Gastrocnemius medialis (tissue), 4 donors: ENCODE measurements at regions of chr12 and their contacts with region 1.

Region 1: DNA sequence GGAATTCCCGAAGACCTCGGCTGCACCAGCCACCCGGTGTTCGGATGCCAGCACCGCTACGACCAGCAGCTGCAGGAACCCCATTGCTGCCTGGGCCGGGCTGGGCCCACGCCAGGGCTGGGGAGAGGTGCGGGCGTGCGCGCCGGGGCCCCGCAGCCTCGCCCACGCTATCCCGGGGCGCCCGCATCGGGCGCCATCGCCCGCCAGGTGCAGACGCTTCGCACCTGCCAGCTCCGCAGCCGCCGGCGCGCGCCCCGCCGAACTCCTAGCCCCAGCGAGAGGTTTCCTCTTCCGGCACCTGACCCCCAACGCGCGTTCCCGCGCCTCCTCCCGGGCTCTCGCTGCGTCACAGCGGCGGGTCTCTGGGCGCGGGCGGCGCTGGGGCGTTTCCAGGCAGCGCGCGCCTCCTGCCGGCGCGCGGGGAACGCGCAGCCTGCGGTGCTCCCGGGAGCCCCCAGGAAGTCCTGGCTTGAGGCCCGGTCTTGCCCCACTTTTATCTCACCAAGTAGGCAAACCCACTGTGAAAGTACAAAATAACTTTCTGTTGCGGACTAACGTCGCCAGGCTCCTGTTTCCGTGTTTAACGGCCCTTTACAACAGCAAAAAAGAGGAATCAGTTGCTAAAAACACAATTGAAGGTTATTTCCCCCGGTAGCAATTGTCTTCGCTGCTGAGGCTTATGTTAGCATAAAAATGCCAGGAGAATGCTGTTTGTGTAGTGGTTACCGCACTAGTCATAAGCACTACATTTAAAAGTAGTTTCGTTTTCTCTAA is at the start of gene TM7SF3:
- DNase-seq: peak; percentile 86 to 92
- ATAC-seq: peak; percentile 91 to 94
- H3K4me3 ChIP-seq: peak within 1 kb of the TSS; percentile 76 to 98 (median 89)
- H3K27ac ChIP-seq: peak within 1 kb of the TSS; percentile 85 to 95 (median 92)
- H3K4me1 ChIP-seq: peaks cover 16 to 26% of the 10 kb centered on the region in 2 donors
- H3K27me3 ChIP-seq: no peaks in the 10 kb centered on the region
- CTCF ChIP-seq: peak; percentile 79 to 99 (median 96)
- POLR2A ChIP-seq: peak; percentile 57 to 61
- total RNA-seq, gene TM7SF3: 8.6 to 19.8 (median 14.3) TPM

Region 2: GRCh38 chr12:26853303-26854030 is 160.8 kb before region 1 on chr12:
- in situ Hi-C with region 1: loop called in 1 of 4 experiments (anchors 5 kb)
- intact Hi-C with region 1: loop called (anchors 5 kb)
- DNase-seq: peak; percentile 29 to 50
- ATAC-seq: peak; percentile 80 to 84
- H3K4me3 ChIP-seq: no peak overlapping the region
- H3K27ac ChIP-seq: no peak overlapping the region
- H3K4me1 ChIP-seq: peaks cover 0 to 6% of the 10 kb centered on the region in 2 donors
- H3K27me3 ChIP-seq: no peaks in the 10 kb centered on the region
- CTCF ChIP-seq: peak; percentile 69 to 87 (median 79)
- POLR2A ChIP-seq: no peak

Region 3: DNA sequence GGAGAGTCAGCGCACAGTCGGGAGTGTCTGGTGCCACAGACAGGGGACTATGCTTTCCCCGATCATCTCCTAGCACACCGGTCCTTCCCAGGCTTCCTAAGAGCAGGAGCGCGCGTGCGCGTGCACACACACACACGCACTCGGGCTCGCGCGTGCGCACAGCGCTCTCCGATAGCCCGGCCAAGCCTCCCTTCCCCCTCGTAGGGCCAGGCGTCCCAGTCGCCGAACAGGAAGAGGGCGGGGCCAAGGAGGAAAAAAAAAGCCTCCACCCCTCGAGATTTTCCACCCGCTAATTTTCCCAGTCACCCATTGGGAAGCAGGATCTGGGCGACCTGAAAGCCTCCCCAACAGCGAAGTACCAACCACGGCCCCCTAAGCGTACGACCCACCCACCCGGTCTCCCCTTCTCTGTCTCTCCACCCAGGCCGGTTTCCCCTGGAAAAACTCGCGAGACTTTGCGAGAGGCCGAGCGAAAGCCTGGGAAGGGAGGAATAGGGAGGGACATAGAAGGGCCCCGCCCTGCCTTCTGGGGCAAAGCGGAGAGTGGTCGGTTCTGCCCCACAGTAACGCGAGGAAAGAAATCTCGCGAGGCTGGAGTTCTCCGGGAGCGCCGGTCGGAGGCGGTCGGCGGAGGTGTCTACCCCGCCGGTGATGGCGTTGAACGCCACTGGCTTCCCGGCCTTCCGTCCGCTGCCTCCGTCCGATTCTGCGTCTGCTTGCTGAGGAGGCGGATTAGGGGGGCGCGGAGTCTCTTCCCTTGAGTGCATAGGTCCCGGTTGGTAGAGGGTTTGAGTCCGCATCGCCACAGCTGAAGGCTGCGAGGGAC is 76.2 kb before region 1 on chr12 and contains the starts of genes FGFR1OP2 and INTS13:
- in situ Hi-C with region 1: loop called in 1 of 4 experiments (anchors 5 kb)
- intact Hi-C with region 1: loop called (anchors 1 kb)
- DNase-seq: peak; percentile 98
- ATAC-seq: peak; percentile 94
- H3K4me3 ChIP-seq: peak within 1 kb of the TSS; percentile 68 to 99 (median 90)
- H3K27ac ChIP-seq: peak within 1 kb of the TSS; percentile 94 to 97 (median 96)
- H3K4me1 ChIP-seq: peaks cover 57 to 69% of the 10 kb centered on the region in 2 donors
- H3K27me3 ChIP-seq: no peaks in the 10 kb centered on the region
- CTCF ChIP-seq: no peak
- POLR2A ChIP-seq: peak; percentile 95 to 96
- total RNA-seq, gene FGFR1OP2: 43.8 to 56.4 (median 45.9) TPM
- total RNA-seq, gene INTS13: 21.3 to 39.9 (median 32.7) TPM

Region 4: DNA sequence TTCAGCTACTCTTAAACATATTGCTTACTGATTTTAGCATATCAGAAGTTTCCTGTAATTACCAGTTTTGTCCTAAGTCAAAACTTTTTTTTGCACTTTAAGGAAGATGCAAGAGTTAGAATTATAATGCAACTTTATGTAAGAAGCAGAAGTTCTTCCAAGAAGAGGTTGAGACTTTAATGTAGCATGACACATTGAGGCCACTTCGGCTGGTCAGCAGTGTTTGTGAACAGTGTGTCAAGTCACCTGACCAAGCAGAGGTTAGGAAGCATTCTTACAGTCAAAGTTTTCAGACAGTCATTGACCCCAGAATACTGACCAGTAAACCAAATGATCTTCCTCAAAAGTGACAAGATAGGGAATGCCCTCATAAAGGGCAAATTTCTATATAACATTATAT is 60.8 kb before region 1 on chr12:
- in situ Hi-C with region 1: no loop called
- intact Hi-C with region 1: no loop called
- DNase-seq: peak in 1 of 2 donors; percentile 36
- ATAC-seq: peak; percentile 72 to 85
- H3K4me3 ChIP-seq: no peak overlapping the region
- H3K27ac ChIP-seq: no peak overlapping the region
- H3K4me1 ChIP-seq: peaks cover 0 to 4% of the 10 kb centered on the region in 2 donors
- H3K27me3 ChIP-seq: no peaks in the 10 kb centered on the region
- CTCF ChIP-seq: no peak
- POLR2A ChIP-seq: no peak

Region 5: GRCh38 chr12:27048822-27049752 is 34.8 kb after region 1 on chr12:
- in situ Hi-C with region 1: no loop called
- intact Hi-C with region 1: no loop called
- DNase-seq: no peak
- ATAC-seq: no peak
- H3K4me3 ChIP-seq: no peak overlapping the region
- H3K27ac ChIP-seq: no peak overlapping the region
- H3K4me1 ChIP-seq: no peaks in the 10 kb centered on the region
- H3K27me3 ChIP-seq: no peaks in the 10 kb centered on the region
- CTCF ChIP-seq: no peak
- POLR2A ChIP-seq: no peak

Region 6: DNA sequence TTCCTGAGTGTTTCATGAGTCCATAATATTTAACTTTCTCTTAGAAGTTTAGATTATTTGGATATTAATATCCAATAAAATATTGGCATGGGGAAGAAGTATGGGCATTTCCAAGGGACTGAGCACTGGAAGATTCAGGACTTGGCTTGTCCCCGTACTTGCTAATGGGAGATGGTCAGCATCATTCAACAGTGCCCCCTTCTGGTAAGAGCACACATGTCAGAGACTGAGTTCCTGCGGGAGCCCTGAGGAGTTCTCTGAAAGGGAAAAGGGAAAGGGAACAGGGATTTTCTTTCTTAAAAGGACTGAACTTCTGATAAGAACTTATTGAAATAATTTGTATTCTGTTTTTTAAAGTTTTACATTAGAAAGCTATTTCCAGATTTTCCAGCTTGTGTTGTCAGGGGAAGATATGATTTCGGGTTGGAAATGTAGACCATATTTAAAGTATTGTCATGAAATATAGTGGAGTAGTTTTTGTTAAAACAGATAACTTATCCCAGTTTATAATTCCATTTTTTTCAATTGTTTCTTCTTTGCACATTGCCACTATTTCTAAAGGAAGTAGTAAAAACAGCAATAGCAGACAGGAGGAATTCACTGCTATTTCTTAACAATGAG is 127.9 kb after region 1 on chr12:
- in situ Hi-C with region 1: no loop called
- intact Hi-C with region 1: loop called (anchors 5 kb)
- DNase-seq: peak; percentile 5 to 24
- ATAC-seq: peak; percentile 66 to 82
- H3K4me3 ChIP-seq: no peak overlapping the region
- H3K27ac ChIP-seq: no peak overlapping the region
- H3K4me1 ChIP-seq: no peaks in the 10 kb centered on the region
- H3K27me3 ChIP-seq: no peaks in the 10 kb centered on the region
- CTCF ChIP-seq: peak; percentile 26 to 69 (median 36)
- POLR2A ChIP-seq: no peak

Region 7: DNA sequence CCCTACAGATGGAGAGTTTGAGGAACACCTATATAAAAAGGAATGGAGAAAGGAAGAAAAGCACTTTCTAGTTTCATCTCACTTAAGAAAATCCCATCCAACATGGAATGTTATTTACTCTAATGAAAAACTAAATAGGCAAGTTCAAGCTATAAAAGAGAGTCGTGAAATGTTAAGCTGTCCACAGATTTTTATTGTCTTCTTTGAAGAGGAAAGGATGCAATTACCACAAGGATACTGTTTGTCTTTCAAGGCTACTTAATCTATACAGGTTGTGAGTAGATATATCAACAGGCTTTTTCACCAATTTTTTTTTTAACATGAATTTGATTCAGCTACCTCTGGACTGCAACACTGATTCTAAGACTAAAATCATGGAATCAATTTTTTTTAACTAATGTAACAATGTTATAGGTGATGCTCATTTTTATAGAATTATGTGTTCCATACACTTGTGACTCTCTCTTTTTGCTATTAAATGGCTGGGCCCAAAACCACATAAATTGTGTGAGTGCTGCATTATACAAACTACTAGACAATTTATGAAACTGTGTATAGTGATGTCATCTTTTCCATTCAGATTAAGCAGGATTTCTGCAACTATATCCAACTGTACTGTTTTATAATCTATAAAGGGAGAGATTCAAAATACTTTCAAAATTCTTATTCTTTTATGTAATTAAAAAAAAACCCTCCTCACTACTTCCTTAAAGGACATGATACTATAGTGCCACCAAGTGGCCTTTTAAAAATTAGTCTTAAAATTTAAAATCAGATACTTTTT is 291.6 kb after region 1 on chr12:
- in situ Hi-C with region 1: loop called in 2 of 4 experiments (anchors 5 to 25 kb)
- intact Hi-C with region 1: loop called (anchors 2 kb)
- DNase-seq: no peak
- ATAC-seq: no peak
- H3K4me3 ChIP-seq: no peak overlapping the region
- H3K27ac ChIP-seq: peak overlapping the region in 1 of 4 donors; percentile 18
- H3K4me1 ChIP-seq: no peaks in the 10 kb centered on the region
- H3K27me3 ChIP-seq: no peaks in the 10 kb centered on the region
- CTCF ChIP-seq: peak in 3 of 5 experiments; percentile 39 to 72 (median 64)
- POLR2A ChIP-seq: no peak